Activated CD4-positive, alpha-beta memory T cell treated with anti-CD3 and anti-CD28 coated beads for 36 hours (primary cell): ENCODE measurements at regions of chr10 and their contacts with region 1.

Region 1: DNA sequence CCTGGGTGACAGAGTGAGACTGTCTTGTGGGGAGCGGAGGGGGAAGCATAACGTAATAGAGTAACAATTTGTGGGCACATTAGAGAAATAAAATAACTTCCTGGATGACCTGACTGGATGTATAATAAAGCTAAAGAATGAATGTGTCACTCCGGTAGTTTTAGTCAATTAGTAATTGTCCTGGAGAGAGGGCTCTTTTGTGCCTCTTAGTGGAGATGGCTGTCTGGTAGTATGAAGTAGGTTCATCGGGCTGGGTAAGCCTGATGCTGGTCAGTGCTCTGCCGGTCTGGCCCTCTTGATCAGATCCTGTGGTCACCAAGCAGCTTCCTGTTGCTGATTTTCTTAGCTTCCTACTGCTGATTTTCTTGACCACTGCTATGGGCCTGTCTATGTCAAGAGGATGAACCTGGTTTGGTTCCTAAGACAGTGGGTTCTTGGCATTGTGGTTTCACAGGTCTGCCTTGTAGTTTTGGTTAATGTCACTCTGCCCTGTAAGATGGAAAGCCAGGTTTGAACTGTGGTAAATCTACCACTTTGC is 34.1 kb downstream of the ZRANB1 start:
- DNase-seq: no peak
- H3K4me3 Mint-ChIP-seq: no peak overlapping the region
- H3K27ac Mint-ChIP-seq: no peak overlapping the region
- H3K4me1 Mint-ChIP-seq: peaks cover 14% of the 10 kb centered on the region
- H3K27me3 Mint-ChIP-seq: no peaks in the 10 kb centered on the region

Region 2: DNA sequence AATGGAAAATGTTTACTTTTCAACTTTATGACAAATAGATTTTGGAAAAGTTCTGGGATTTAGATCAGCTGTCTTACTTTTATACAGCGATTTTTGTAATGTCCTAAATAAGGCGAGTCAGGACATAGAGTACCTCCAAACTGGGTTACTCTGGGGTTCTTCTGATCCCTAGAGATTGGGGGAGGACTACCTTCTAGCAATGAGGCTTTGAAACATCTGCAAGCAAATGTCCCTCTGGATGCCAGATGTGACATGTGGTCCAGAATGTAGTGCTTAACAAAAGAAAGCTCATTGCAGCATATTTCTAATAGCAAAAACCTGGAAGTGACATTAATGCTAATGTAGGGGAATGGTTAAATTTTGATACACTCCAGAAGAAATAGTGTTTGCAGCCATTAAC is 138.4 kb before region 1 on chr10:
- CTCF ChIA-PET with region 1: no interaction called
- POLR2A ChIA-PET with region 1: no interaction called
- intact Hi-C with region 1: no loop called
- DNase-seq: no peak
- H3K4me3 Mint-ChIP-seq: no peak overlapping the region
- H3K27ac Mint-ChIP-seq: no peak overlapping the region
- H3K4me1 Mint-ChIP-seq: no peaks in the 10 kb centered on the region
- H3K27me3 Mint-ChIP-seq: no peaks in the 10 kb centered on the region

Region 3: DNA sequence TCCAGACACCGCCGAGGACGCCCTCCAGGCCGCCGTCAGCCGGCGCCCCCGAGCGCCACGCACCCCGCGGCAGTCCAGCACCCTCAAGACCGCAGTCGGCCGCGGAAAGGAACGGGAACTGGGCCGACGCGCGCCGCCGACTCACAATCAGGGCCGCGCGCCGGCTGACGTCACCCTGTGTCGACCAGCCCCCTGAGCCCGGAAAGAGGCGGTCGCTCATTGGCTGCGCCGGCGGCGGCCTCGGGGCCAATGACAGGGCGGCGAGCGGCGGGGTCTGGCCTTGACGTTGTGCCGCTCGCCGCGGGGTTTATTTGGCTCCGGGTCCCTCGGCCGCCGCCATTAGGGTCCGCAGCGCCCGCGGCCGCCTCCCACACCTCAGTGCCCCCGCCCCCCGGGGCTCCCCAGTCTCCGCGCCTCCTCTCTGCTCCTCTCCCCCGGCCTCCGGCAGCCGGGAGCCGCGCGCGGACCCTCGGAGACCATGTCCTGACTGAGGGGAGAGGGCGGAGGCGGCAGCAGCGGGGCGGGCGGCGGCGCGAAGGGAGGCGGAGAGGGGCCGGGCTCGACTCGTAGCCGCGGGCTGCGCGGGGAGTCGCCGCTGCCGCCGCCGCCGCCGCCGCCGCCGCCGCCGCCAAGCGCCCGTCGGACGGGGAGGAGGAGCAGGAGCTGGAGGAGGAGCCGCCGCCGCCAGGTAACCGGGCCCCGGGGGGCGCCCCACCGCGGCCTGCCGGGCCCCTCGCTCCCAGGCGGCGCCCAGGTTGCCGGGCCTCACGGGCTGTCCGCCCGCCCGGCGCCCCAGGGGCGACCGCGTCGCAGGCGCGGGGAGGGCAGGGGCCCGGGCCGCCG is 59.2 kb before region 1 on chr10:
- CTCF ChIA-PET with region 1: no interaction called
- POLR2A ChIA-PET with region 1: no interaction called
- intact Hi-C with region 1: loop called (anchors 5 kb)
- DNase-seq: peak; percentile 97
- H3K4me3 Mint-ChIP-seq: peak overlapping the region; percentile 87
- H3K27ac Mint-ChIP-seq: peak overlapping the region; percentile 81
- H3K4me1 Mint-ChIP-seq: peaks cover 30% of the 10 kb centered on the region
- H3K27me3 Mint-ChIP-seq: no peaks in the 10 kb centered on the region

Region 4: GRCh38 chr10:124943301-124944092 is 32.5 kb before region 1 on chr10:
- CTCF ChIA-PET with region 1: no interaction called
- POLR2A ChIA-PET with region 1: no interaction called
- intact Hi-C with region 1: loop called (anchors 5 kb)
- DNase-seq: no peak
- H3K4me3 Mint-ChIP-seq: no peak overlapping the region
- H3K27ac Mint-ChIP-seq: no peak overlapping the region
- H3K4me1 Mint-ChIP-seq: peaks cover 56% of the 10 kb centered on the region
- H3K27me3 Mint-ChIP-seq: no peaks in the 10 kb centered on the region